Naive thymus-derived CD8-positive, alpha-beta T cell (primary cell): ENCODE measurements at regions of chr19 and their contacts with region 1.

Region 1: DNA sequence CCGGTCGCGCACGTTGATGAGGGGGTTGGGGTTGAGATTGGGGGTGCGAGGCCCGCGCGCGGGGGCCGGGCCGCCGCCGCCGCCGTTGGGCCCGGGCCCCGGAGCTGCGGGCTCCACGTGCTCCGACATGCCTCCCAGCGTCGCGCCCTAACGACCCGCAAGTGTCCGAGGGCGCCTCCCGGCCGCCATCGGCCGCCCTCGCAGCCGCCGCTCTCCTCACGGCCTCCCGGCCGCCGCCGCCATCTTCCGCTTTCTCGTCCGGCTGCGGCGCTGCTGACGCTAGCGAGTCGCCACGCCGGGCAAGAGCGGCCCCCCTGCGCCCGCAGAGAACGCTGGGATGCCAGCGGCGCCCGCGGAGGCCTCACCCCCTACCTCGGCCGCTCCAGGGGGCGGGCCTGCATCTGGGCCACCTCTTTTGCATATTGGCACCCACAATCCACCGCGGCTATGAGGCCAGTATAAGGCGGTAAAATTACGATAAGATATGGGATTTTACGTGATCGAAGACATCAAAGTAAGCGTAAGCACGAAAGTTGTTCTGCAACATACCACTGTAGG is at the start of gene TMEM259:
- DNase-seq: peak in 9 of 10 donors; percentile 94 to 99 (median 97)
- ATAC-seq: peak; percentile 84 to 86
- H3K4me3 Mint-ChIP-seq: peak within 1 kb of the TSS; percentile 86 to 94 (median 91)
- H3K27ac Mint-ChIP-seq: peak within 1 kb of the TSS; percentile 96 to 100 (median 99)
- H3K4me1 Mint-ChIP-seq: peaks cover 18 to 53% (median 47%) of the 10 kb centered on the region in 4 donors
- H3K27me3 Mint-ChIP-seq: peaks cover 0 to 6% (median 0%) of the 10 kb centered on the region in 5 donors
- polyA plus RNA-seq, gene TMEM259: 37.9 to 77.0 (median 52.0) TPM

Region 2: DNA sequence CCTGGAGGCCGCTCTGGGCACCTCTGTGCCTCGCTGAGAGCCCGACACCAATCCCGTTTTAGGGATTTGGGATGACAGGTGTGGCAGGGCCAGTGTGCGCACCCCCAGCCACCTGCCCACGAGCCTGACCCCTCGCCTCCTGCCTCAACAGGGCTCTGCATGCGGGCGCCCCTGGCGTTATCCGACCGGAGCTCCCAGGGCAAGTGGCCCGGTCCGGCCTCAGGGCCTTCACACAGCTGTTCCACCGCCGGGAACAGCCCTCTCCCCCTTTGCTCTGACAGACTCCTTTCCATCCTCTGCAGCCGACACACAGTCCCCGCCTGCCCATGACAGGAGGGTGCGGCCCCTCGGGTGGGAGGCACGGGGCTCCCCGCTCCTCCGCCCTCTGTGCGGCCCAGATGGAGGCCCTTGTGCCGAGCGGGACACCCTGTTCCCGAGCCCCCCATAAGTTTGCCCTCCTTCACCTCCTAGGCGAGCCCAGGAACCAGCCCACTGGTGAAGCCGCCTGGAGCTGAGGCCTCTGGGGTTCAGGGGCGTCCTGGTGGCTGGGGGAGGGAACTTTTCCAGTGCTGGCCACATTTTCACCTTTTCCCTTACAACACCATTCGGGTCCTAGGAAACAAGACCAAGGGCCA is 43.8 kb before region 1 on chr19:
- POLR2A ChIA-PET with region 1: no interaction called
- DNase-seq: no peak
- ATAC-seq: no peak
- H3K4me3 Mint-ChIP-seq: no peak overlapping the region
- H3K27ac Mint-ChIP-seq: no peak overlapping the region
- H3K4me1 Mint-ChIP-seq: peaks cover 0 to under 1% (median 0%) of the 10 kb centered on the region in 4 donors
- H3K27me3 Mint-ChIP-seq: no peaks in the 10 kb centered on the region

Region 3: DNA sequence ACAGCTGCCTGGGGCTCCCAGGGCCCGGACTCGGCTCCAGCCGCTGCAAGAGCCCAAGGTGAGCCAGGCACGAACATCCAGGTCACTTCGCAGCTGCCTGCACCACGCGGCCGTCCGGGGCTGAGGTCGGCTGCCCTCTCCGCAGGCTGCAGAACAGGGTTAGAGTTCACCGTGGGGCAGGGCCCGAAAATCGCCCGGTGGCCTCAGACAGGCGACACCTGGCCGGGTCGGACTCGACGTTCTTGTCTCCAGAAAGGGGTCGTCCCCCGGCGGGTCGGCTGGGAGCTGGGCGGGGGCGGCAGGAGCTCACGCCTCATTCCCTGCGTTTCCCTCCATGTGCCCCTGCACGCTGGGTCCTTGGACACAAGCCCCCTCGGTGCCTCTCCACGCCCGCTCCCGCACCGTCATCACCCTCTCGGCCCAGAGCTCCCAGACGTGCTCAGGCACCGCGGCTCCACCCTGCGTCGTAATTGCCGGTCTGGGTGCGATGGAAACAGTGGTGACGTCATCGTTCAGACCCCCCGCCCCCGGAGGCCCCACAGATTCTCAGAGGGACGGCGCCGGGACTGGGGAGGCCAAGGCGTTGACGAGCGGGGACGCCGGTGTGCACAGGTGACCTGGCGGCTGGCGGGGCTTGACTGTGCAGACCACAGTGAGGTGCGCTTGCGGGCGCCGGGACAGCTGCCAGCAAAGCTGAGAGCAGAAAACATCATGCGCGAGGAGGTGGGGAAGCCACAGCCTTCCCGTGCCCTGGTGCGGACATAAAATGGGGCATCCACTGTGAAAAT is 24.7 kb before region 1 on chr19:
- POLR2A ChIA-PET with region 1: interaction called, 13 read pairs
- DNase-seq: peak; percentile 55 to 94 (median 86)
- ATAC-seq: peak; percentile 84 to 87
- H3K4me3 Mint-ChIP-seq: peak overlapping the region; percentile 61 to 87 (median 80)
- H3K27ac Mint-ChIP-seq: peak overlapping the region; percentile 51 to 96 (median 94)
- H3K4me1 Mint-ChIP-seq: peaks cover 6 to 20% (median 19%) of the 10 kb centered on the region in 4 donors
- H3K27me3 Mint-ChIP-seq: peaks cover 5 to 30% (median 11%) of the 10 kb centered on the region in 5 donors

Region 4: GRCh38 chr19:1006711-1007398 is 14.1 kb before region 1 on chr19:
- POLR2A ChIA-PET with region 1: interaction called, 13 read pairs
- DNase-seq: no peak
- ATAC-seq: no peak
- H3K4me3 Mint-ChIP-seq: no peak overlapping the region
- H3K27ac Mint-ChIP-seq: peak overlapping the region in 5 of 10 donors; percentile 44 to 78 (median 58)
- H3K4me1 Mint-ChIP-seq: peaks cover 2 to 8% (median 5%) of the 10 kb centered on the region in 4 donors
- H3K27me3 Mint-ChIP-seq: peaks cover 0 to 3% (median 0%) of the 10 kb centered on the region in 5 donors

Region 5: DNA sequence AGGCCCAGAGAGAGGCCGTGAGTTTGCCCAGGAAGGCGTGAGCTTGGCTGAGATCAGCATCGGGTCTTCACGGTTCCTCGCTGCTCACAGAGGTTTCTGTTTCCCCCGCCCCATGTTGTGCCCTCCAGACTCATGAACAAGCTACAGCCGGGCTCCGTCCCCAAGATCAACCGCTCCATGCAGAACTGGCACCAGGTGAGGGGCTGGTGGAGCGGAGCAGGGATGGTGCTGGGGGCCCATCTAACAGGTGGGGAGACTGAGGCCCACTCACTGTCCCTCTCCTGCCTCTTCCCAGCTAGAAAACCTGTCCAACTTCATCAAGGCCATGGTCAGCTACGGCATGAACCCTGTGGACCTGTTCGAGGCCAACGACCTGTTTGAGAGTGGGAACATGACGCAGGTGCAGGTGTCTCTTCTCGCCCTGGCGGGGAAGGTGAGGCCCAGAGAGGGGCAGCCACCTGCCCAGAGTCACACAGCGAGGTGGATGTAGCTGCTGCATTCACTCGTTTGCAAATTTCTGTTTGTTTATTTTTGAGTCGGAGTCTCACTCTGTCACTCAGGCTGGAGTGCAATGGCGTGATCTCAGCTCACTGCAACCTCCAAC is 11.4 kb after region 1 on chr19:
- POLR2A ChIA-PET with region 1: interaction called, 400 read pairs
- DNase-seq: no peak
- ATAC-seq: no peak
- H3K4me3 Mint-ChIP-seq: peak overlapping the region in 4 of 10 donors; percentile 38 to 65 (median 54)
- H3K27ac Mint-ChIP-seq: peak overlapping the region; percentile 68 to 97 (median 88)
- H3K4me1 Mint-ChIP-seq: peaks cover 23 to 54% (median 50%) of the 10 kb centered on the region in 4 donors
- H3K27me3 Mint-ChIP-seq: no peaks in the 10 kb centered on the region

Region 6: GRCh38 chr19:1039646-1040475 is 18.9 kb after region 1 on chr19 and contains the start of gene ABCA7:
- POLR2A ChIA-PET with region 1: interaction called, 400 read pairs
- DNase-seq: peak; percentile 98 to 100 (median 99)
- ATAC-seq: peak; percentile 86 to 93
- H3K4me3 Mint-ChIP-seq: peak within 1 kb of the TSS; percentile 93 to 100 (median 99)
- H3K27ac Mint-ChIP-seq: peak within 1 kb of the TSS; percentile 92 to 98 (median 94)
- H3K4me1 Mint-ChIP-seq: peaks cover 28 to 63% (median 55%) of the 10 kb centered on the region in 4 donors
- H3K27me3 Mint-ChIP-seq: no peaks in the 10 kb centered on the region
- polyA plus RNA-seq, gene ABCA7: 4.2 to 14.4 (median 8.7) TPM

Region 7: GRCh38 chr19:1103708-1104310 is 82.9 kb after region 1 on chr19 and contains the start of gene GPX4:
- POLR2A ChIA-PET with region 1: interaction called, 10 read pairs
- DNase-seq: peak; percentile 90 to 99 (median 98)
- ATAC-seq: peak; percentile 85 to 89
- H3K4me3 Mint-ChIP-seq: peak within 1 kb of the TSS; percentile 66 to 87 (median 76)
- H3K27ac Mint-ChIP-seq: peak within 1 kb of the TSS; percentile 37 to 97 (median 94)
- H3K4me1 Mint-ChIP-seq: peaks cover 12 to 47% (median 32%) of the 10 kb centered on the region in 4 donors
- H3K27me3 Mint-ChIP-seq: no peaks in the 10 kb centered on the region
- polyA plus RNA-seq, gene GPX4: 370 to 465 (median 405) TPM